Activated CD4-positive, alpha-beta T cell treated with anti-CD3 and anti-CD28 coated beads for 36 hours (primary cell): ENCODE measurements at regions of chr1 and their contacts with region 1.

Region 1: DNA sequence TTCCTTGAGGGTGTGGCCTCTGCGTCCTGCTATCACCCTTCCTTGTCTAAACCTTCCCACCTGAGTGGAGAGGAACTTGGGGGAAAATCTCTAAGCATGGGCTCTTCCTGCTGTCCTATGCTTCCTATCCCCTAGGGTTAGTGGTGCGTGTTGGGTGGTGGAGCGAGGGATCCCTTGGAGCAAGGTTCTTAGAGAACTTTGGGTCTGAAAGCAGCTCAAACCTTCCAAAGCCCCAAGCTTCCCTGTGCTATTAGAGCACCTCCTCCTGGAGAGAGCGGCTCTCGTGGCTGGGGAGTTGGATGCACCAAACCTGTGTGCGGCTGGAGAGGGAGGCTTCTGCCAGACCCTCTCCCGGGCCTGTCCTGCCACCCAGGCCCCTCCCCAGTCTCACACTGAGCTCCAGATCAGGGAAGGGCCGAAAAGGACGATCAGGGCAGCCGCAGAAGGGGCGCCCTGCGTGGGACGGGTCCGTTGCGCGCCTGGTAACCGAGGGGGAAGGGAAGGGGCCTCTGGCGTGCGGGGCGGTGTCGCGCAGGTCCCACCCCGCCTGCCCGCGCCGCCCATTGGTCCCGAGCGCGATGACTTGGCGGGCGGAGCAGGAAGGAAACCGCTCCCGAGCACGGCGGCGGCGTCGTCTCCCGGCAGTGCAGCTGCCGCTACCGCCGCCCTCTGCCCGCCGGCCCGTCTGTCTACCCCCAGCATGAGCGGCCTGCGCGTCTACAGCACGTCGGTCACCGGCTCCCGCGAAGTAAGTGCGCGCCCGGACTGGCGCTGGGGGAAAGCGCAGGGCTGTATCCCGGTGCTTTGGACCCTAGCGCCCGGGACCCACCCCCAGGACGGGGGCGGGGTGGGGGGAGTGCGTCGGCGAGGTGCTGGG is at the start of gene SH3BGRL3:
- DNase-seq: peak; percentile 92
- ATAC-seq: peak; percentile 56
- H3K4me3 Mint-ChIP-seq: peak within 1 kb of the TSS; percentile 78
- H3K27ac Mint-ChIP-seq: peak within 1 kb of the TSS; percentile 94
- H3K4me1 Mint-ChIP-seq: peaks cover 82% of the 10 kb centered on the region
- H3K27me3 Mint-ChIP-seq: no peaks in the 10 kb centered on the region
- total RNA-seq, gene SH3BGRL3: 267 to 381 TPM

Region 2: GRCh38 chr1:26306290-26307229 is 26.9 kb after region 1 on chr1 and contains the start of gene UBXN11:
- CTCF ChIA-PET with region 1: interaction called, 75 read pairs
- POLR2A ChIA-PET with region 1: interaction called, 4 read pairs
- intact Hi-C with region 1: loop called in 1 of 2 experiments (anchors 1 kb)
- DNase-seq: peak; percentile 96
- ATAC-seq: peak; percentile 94
- H3K4me3 Mint-ChIP-seq: peak within 1 kb of the TSS; percentile 90
- H3K27ac Mint-ChIP-seq: peak within 1 kb of the TSS; percentile 95
- H3K4me1 Mint-ChIP-seq: peaks cover 32% of the 10 kb centered on the region
- H3K27me3 Mint-ChIP-seq: no peaks in the 10 kb centered on the region
- total RNA-seq, gene UBXN11: 19.4 to 22.2 TPM

Region 3: DNA sequence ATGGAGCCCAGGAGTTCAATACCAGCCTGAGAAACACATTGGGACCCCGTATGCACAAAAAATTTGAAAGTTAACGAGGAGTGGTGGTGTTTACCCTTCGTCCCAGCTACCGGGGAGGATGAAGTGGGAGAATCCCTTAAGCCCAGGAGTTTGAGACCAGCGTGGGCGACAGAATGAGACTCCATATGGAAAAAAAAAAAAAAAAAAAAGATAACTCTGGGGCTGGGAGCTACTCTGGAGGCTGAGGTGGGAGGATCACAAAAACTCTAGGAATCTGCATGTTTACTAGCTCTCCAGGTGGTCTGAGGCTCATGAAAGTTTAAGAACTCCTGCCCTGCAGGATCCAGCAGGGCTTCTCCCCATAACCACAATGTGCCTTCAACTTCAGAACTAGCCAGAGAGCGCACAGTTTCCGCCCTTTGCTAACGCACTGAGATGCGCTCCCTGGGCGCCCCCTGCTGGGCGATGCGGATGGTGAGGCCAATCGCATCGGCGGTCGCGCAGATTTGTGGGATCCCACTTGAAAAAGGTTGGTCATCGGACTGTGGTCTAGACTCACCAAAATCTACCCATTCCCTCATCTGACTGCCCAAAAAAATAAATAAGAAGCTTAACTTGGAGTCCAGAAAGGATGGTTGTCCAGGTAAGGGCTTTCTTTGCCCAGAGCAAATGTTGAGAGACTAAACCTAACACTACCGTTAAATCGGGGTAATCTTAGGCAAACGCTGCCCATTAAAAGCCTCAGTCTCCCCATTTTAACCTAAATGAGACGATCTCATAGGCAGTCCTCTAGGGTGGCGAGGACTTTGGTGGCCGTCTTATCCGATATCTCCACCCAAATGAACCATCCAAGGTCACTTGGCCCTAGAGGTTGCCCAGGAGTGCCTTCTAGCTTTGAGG is 84.1 kb after region 1 on chr1:
- CTCF ChIA-PET with region 1: interaction called, 6 read pairs
- POLR2A ChIA-PET with region 1: no interaction called
- intact Hi-C with region 1: loop called (anchors 1 to 5 kb)
- DNase-seq: peak; percentile 92
- ATAC-seq: peak; percentile 77
- H3K4me3 Mint-ChIP-seq: no peak overlapping the region
- H3K27ac Mint-ChIP-seq: no peak overlapping the region
- H3K4me1 Mint-ChIP-seq: peaks cover 28% of the 10 kb centered on the region
- H3K27me3 Mint-ChIP-seq: peaks cover 11% of the 10 kb centered on the region

Region 4: GRCh38 chr1:26391450-26391849 is 111.8 kb after region 1 on chr1:
- CTCF ChIA-PET with region 1: interaction called, 4 read pairs
- POLR2A ChIA-PET with region 1: no interaction called
- intact Hi-C with region 1: loop called in 1 of 2 experiments (anchors 1 kb)
- DNase-seq: peak; percentile 57
- ATAC-seq: peak; percentile 74
- H3K4me3 Mint-ChIP-seq: no peak overlapping the region
- H3K27ac Mint-ChIP-seq: no peak overlapping the region
- H3K4me1 Mint-ChIP-seq: peaks cover 28% of the 10 kb centered on the region
- H3K27me3 Mint-ChIP-seq: no peaks in the 10 kb centered on the region

Region 5: DNA sequence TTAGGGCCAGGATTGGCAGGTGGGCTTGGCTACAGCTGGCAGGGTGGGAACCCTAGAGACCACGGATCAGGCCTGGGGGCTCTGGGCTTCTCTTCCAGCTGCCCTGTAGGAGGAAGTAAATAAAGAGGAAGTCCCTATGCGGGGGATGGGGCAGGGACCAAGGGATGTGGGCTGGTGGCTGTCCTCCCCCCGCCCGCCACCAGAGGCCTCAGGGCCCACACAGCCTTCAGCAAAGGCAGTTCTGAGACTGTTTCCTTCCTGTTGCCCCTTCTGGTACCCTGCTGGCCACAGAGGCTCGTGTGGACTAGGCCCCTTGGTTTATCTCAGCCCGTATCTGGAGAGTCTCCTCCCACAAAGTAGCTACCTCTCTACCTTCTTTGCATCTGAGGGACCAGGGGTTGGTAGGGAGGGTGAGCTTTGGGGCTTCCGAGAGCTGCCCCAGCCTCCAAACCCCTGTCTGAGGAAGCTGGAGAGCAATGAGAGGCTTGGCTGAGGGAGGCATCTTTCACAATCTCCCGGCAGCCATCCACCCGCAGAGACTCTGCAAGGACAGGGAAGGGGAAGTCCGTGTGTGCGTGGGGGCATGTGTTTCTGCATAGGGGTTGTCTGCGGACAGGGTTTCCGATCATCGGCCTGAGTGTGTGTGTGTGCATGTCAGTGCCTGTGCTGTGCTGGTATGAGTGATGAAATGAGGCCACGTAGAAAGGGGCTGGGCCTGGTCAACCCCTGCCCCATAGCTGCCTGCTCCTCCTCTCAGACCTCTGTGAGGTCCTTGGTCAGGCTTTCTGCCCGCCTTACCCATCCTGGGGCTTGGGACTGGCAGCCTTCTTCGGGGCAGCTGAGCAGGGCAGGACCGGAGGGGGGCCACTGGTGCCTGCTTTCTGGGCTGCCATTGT is 262.4 kb after region 1 on chr1:
- CTCF ChIA-PET with region 1: interaction called, 3 read pairs
- POLR2A ChIA-PET with region 1: no interaction called
- intact Hi-C with region 1: loop called in 1 of 2 experiments (anchors 5 kb)
- DNase-seq: peak; percentile 93
- ATAC-seq: peak; percentile 65
- H3K4me3 Mint-ChIP-seq: peak overlapping the region; percentile 67
- H3K27ac Mint-ChIP-seq: peak overlapping the region; percentile 94
- H3K4me1 Mint-ChIP-seq: peaks cover 83% of the 10 kb centered on the region
- H3K27me3 Mint-ChIP-seq: no peaks in the 10 kb centered on the region

Region 6: DNA sequence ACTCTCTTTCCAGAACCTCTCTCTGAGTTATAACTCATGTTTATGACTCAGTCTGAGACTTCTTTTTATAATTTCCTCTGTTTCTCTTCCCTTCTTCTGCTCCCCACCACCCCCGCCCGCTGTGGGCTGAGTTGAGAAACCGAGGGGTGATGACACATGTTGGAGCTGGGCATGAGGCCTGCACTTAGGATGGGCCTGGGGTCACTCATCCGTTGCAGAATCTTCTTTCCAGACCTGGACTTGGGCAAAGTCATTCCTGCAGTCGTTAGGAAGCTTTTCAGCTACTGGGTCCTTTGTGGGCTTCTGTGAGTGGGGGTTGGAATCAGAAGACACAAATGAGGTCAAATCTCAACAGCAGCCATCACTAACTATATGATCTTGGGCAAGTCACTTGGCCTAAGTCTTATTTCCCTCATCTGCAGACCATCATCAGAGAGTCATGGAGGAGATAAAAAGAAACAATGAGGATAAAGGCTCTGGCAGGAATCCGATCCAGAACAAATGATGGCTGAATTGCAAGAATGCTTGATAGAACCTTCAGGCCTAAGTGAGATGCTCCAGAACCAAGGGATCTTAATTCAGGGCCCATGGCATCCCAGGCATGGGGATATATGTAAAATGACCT is 303.3 kb after region 1 on chr1:
- CTCF ChIA-PET with region 1: no interaction called
- POLR2A ChIA-PET with region 1: no interaction called
- intact Hi-C with region 1: loop called in 1 of 2 experiments (anchors 5 kb)
- DNase-seq: peak; percentile 93
- ATAC-seq: peak; percentile 55
- H3K4me3 Mint-ChIP-seq: peak overlapping the region; percentile 35
- H3K27ac Mint-ChIP-seq: peak overlapping the region; percentile 95
- H3K4me1 Mint-ChIP-seq: peaks cover 54% of the 10 kb centered on the region
- H3K27me3 Mint-ChIP-seq: no peaks in the 10 kb centered on the region